ENCODE measurements at regions of chr16 and their contacts with region 1.

Region 1: GRCh38 chr16:74623214-74623842 is 16.4 kb upstream of the GLG1 start:
- DNase-seq: peak in 2 of 3 donors; percentile 37 to 46
- H3K4me3 ChIP-seq: no peak overlapping the region
- H3K4me3 Mint-ChIP-seq: no peak overlapping the region
- H3K27ac ChIP-seq: peak overlapping the region in 1 of 2 donors; percentile 27
- H3K27ac Mint-ChIP-seq: peak overlapping the region in 1 of 7 donors; percentile 79
- H3K4me1 ChIP-seq: no peaks in the 10 kb centered on the region
- H3K4me1 Mint-ChIP-seq: no peaks in the 10 kb centered on the region
- H3K27me3 ChIP-seq: no peaks in the 10 kb centered on the region
- H3K27me3 Mint-ChIP-seq: no peaks in the 10 kb centered on the region
- CTCF ChIP-seq: peak; percentile 75

Region 2: GRCh38 chr16:74477226-74477625 is 146.1 kb before region 1 on chr16:
- intact Hi-C with region 1: loop called in 1 of 2 experiments (anchors 10 kb)
- DNase-seq: no peak
- H3K4me3 ChIP-seq: no peak overlapping the region
- H3K4me3 Mint-ChIP-seq: no peak overlapping the region
- H3K27ac ChIP-seq: no peak overlapping the region
- H3K27ac Mint-ChIP-seq: no peak overlapping the region
- H3K4me1 ChIP-seq: no peaks in the 10 kb centered on the region
- H3K4me1 Mint-ChIP-seq: no peaks in the 10 kb centered on the region
- H3K27me3 ChIP-seq: no peaks in the 10 kb centered on the region
- H3K27me3 Mint-ChIP-seq: no peaks in the 10 kb centered on the region
- CTCF ChIP-seq: no peak

Region 3: DNA sequence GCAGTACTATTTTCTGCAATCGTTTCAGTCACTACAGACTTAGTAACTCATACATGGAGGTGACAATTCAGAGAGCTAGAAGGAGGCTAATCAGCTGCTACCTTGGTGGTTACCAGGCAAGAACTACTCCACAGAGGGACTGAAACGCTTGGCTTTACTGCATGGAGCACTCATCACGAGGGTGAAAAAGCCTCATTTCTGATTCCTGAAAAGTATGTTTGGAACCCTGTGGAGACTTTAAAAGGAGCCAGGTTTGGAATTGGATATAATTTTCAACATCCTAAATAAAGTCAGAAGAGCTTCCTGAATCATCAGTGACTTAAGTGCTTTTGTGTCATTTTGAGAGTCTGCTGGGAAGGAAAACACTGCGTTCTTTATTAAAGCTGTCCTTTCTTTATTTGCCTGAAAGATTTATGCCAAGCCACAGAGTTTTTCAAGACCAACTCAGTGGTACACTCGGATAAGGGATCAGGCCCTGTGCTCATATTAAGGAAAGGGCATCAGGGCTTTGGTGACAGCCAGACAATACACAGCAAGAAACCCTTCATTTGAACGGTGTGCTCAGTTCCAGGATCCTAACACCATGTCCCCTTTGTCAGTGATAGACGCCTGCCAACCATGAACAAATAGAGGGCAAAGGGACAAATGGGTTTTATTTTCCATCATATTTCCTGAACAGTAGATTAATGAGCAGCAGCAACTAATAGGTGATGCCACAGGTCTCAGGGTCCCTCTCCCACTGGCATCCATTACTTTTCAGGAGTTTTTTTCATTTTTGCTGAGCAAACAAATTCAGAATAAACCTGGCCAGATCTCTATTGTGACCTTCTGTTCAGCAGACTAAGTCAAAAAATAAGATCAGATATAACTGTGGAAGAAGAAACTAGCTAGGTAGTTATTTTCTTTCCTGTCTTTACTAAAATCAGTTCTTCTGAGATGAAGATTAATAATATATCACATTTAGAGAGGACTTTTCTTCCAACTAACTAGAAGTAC is 121.5 kb before region 1 on chr16:
- intact Hi-C with region 1: loop called in 1 of 2 experiments (anchors 10 kb)
- DNase-seq: no peak
- H3K4me3 ChIP-seq: no peak overlapping the region
- H3K4me3 Mint-ChIP-seq: no peak overlapping the region
- H3K27ac ChIP-seq: no peak overlapping the region
- H3K27ac Mint-ChIP-seq: peak overlapping the region in 2 of 7 donors; percentile 18 to 64
- H3K4me1 ChIP-seq: no peaks in the 10 kb centered on the region
- H3K4me1 Mint-ChIP-seq: no peaks in the 10 kb centered on the region
- H3K27me3 ChIP-seq: no peaks in the 10 kb centered on the region
- H3K27me3 Mint-ChIP-seq: peaks cover 0 to 2% (median 0%) of the 10 kb centered on the region in 3 donors
- CTCF ChIP-seq: no peak

Measured in CD14-positive monocyte (primary cell).